ENCODE measurements at regions of chr7 and their contacts with region 1.

Region 1: DNA sequence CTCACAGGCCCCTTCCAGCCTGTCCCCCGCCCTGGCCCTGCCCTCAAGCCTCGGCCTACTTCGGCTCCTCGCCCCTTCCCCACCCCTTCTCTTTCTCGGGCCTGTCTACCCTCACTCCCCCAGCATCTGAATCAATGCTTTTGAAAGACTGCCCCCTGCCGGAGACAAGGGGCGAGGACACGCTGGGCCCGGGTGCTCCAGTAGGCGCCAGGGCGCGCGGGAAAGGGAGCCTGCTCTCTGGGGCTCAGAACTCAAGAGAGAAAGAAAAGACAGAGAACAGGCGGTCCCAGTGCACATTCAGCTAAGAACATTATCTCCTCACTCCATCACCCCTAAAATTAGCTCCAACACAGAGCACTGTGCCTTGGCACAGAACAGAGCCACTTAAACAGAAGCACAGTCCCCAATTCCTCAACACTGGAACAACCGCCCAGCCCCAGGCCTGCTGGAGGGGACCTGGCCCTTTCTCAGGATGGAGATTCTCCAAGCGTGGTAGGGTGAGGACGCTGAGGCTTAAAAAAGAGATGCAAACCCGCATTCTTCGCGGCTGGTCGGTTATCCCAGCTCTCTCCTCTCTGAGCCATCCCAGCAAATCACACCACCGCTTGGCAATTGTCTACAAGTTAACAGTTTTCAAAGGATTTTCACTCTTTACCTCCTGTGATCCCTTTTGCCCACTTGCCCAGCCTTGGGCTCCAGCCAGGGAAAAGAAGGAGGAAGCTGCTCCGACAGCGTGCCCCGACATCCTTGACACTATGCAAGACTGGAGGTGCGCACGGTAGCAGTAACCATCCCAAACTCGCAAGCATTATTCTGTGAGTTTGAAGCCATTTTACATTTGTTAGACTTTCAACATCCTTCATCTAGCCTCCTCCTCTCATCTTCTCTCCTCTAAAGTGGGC is 2.1 kb downstream of the GIGYF1 start:
- DNase-seq: peak; percentile 88
- H3K4me3 Mint-ChIP-seq: peak overlapping the region; percentile 93
- H3K27ac Mint-ChIP-seq: no peak overlapping the region
- H3K4me1 Mint-ChIP-seq: peaks cover 37% of the 10 kb centered on the region
- H3K27me3 Mint-ChIP-seq: no peaks in the 10 kb centered on the region

Region 2: GRCh38 chr7:100563809-100564400 is 128.0 kb before region 1 on chr7:
- CTCF ChIA-PET with region 1: interaction called, 14 read pairs
- POLR2A ChIA-PET with region 1: no interaction called
- intact Hi-C with region 1: loop called (anchors 5 kb)
- DNase-seq: peak; percentile 86
- H3K4me3 Mint-ChIP-seq: no peak overlapping the region
- H3K27ac Mint-ChIP-seq: no peak overlapping the region
- H3K4me1 Mint-ChIP-seq: peaks cover 18% of the 10 kb centered on the region
- H3K27me3 Mint-ChIP-seq: no peaks in the 10 kb centered on the region

Region 3: DNA sequence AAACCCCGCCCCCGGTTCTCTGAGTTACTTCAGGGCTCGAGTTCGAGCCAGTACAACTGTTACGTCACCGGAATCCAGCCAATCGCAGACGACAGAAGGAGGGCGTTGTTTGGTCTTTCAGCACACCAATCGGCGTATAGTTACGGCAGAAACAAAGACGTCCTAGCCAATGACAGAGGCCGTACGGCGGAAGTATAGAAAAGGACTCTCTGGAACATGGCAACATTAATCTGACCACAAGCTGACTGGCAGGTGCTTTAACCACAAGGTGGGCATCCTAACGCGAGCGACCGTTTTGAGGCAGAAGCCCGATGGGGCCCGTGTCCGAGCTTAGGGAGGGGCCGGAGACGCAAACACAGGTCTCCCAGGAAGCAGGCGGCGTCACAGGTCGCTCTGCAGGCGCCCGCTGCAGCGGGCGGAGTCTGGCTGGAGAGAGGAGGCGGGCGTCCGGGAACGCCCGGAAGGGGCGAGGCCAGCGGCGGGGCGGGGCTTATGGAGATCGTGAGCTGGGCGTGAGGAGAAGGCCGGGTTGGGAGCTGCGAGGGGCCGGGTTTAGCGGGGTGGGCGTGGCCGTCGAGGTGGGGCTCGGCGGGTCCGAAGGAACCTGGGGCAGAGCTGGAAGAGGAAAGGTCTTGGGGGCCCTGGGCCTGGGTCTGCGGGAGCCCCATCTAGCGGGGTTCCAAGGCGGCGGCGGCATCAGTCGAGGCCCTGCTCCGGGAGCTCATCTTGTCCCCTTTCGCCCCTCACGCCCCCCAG is 79.8 kb before region 1 on chr7 and contains the start of gene MOSPD3:
- CTCF ChIA-PET with region 1: interaction called, 33 read pairs
- POLR2A ChIA-PET with region 1: no interaction called
- intact Hi-C with region 1: no loop called
- DNase-seq: peak; percentile 98
- H3K4me3 Mint-ChIP-seq: peak within 1 kb of the TSS; percentile 90
- H3K27ac Mint-ChIP-seq: peak within 1 kb of the TSS; percentile 98
- H3K4me1 Mint-ChIP-seq: peaks cover 14% of the 10 kb centered on the region
- H3K27me3 Mint-ChIP-seq: no peaks in the 10 kb centered on the region
- total RNA-seq, gene MOSPD3: 14.0 to 14.4 TPM

Region 4: DNA sequence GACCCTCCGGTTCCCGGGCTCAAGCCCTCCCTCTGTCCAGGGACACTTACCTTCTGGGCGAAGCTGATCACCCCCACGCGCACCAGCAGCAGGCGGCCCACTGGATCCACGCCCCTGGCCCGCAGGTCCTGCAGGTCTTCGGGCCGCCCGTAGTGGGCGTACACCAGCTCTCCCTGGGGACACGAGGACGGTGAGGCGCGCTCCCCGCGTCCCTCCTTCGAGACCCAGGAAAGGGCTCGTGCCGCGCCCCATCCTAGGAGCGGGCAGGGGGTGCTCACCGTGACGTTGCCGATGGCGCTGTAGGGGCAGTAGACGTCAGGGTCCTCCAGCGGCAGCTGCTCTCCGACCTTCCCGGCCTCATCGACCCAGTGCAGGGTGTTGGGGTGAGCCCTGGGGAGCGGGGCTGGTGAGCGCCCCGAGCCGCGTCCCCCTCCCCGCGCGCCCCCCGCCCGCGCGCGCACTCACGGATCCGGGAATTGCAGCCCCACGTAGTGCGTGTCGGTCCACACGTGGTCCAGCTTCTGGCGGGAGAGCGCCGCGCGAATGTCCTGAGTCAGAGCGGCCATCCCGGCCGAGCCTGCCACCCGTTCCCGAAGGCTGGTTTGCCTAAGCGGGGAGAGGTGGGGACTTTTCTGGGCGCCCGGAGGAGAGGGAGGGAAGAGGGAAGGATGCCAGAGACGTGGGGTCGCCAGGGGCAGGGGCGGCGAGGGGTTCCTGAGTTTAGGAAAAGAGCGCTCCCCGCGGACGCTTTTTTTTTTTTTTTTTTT is 58.8 kb before region 1 on chr7:
- CTCF ChIA-PET with region 1: interaction called, 27 read pairs
- POLR2A ChIA-PET with region 1: interaction called, 3 read pairs
- intact Hi-C with region 1: loop called (anchors 5 kb)
- DNase-seq: peak; percentile 78
- H3K4me3 Mint-ChIP-seq: peak overlapping the region; percentile 77
- H3K27ac Mint-ChIP-seq: peak overlapping the region; percentile 82
- H3K4me1 Mint-ChIP-seq: peaks cover 12% of the 10 kb centered on the region
- H3K27me3 Mint-ChIP-seq: peaks cover 3% of the 10 kb centered on the region

Region 5: GRCh38 chr7:100680167-100680575 is 11.8 kb before region 1 on chr7:
- CTCF ChIA-PET with region 1: interaction called, 61 read pairs
- POLR2A ChIA-PET with region 1: interaction called, 10 read pairs
- intact Hi-C with region 1: loop called (anchors 2 kb)
- DNase-seq: no peak
- H3K4me3 Mint-ChIP-seq: no peak overlapping the region
- H3K27ac Mint-ChIP-seq: peak overlapping the region; percentile 19
- H3K4me1 Mint-ChIP-seq: peaks cover 24% of the 10 kb centered on the region
- H3K27me3 Mint-ChIP-seq: no peaks in the 10 kb centered on the region

Region 6: DNA sequence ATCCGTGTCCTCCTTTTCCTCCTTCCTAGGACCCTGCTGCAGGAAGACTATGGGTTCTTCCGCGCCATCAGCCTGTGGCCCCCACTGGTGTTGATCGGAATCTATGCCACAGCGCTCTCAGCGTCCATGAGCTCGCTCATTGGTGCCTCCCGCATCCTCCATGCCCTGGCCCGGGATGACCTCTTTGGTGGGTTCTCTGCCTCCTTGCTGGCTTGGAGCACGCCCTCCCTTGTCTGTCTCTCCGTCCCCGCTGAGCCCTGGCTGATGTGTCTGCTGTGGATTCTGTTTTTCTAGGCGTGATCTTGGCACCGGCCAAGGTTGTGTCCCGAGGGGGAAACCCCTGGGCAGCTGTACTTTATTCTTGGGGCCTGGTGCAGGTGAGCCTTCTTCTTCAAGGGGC is 167.9 kb after region 1 on chr7:
- CTCF ChIA-PET with region 1: no interaction called
- POLR2A ChIA-PET with region 1: no interaction called
- intact Hi-C with region 1: no loop called
- DNase-seq: no peak
- H3K4me3 Mint-ChIP-seq: no peak overlapping the region
- H3K27ac Mint-ChIP-seq: no peak overlapping the region
- H3K4me1 Mint-ChIP-seq: no peaks in the 10 kb centered on the region
- H3K27me3 Mint-ChIP-seq: no peaks in the 10 kb centered on the region

Measured in activated CD4-positive, alpha-beta memory T cell treated with anti-CD3 and anti-CD28 coated beads for 36 hours (primary cell).